Mucosa of descending colon (tissue), 3 donors: ENCODE measurements at regions of chr18 and their contacts with region 1.

Region 1: GRCh38 chr18:75209129-75209950 is at the start of gene PTGR3:
- DNase-seq: peak; percentile 89 to 90 (median 89)
- ATAC-seq: peak; percentile 69
- H3K4me3 ChIP-seq: peak within 1 kb of the TSS; percentile 86
- H3K4me1 ChIP-seq: peaks cover 37% of the 10 kb centered on the region
- CTCF ChIP-seq: no peak
- total RNA-seq, gene PTGR3: 47.6 to 61.4 (median 57.1) TPM

Region 2: DNA sequence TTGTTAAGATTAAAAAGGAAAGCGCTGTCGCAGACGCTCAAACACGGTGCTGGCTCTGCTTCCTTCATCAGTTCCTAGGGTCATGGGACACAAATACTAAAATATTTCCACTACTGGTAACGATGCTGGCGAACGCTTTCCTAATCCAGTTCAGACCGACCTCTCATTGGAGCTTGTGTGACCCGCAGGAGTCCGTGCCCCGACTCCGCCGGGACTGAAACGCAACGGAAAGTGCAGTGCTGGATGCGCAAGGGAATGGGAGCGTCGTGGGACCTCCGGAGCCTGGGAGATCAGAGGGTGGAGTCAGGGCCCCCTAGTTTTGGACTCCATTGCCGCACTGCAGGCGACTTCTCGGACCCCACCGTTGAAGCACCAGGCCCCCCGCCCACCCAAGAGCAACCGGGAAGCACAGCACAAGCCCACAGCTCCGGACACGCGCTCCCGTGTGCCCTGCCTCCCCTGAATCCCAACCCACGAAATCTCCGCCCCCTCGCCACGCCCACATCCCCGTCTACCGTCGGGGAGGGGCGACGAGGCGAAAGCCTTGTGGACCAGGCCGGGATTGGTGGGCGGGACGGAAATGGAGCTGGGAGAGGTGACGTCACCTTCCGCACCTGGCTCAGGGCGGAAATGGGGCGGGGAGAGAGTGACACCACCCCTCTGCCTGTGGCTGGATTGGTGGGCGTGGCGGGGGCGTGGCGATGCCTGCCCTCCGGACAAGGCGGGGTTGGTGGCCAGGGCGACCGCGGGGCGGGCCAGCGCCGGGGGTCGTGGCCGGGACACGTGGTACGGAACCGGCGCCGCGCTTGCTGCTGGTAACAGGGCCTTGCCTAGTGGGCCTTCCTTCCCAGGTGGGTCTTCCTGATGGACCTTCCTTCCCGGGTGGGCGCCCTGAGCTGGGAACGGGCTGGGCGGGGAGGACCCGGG is 713.5 kb before region 1 on chr18 and contains the start of gene CNDP2:
- intact Hi-C with region 1: loop called in 1 of 2 experiments (anchors 10 kb)
- DNase-seq: peak; percentile 100
- ATAC-seq: peak; percentile 94
- H3K4me3 ChIP-seq: peak within 1 kb of the TSS; percentile 90
- H3K4me1 ChIP-seq: peaks cover 23% of the 10 kb centered on the region
- CTCF ChIP-seq: no peak
- total RNA-seq, gene CNDP2: 148 to 263 (median 244) TPM

Region 3: GRCh38 chr18:74645679-74646078 is 563.7 kb before region 1 on chr18:
- intact Hi-C with region 1: loop called in 1 of 2 experiments (anchors 10 kb)
- DNase-seq: no peak
- ATAC-seq: no peak
- H3K4me3 ChIP-seq: no peak overlapping the region
- H3K4me1 ChIP-seq: no peaks in the 10 kb centered on the region
- CTCF ChIP-seq: no peak

Region 4: GRCh38 chr18:75041586-75041985 is 167.8 kb before region 1 on chr18:
- intact Hi-C with region 1: no loop called
- DNase-seq: peak in 1 of 3 donors; percentile 28
- ATAC-seq: peak; percentile 48
- H3K4me3 ChIP-seq: no peak overlapping the region
- H3K4me1 ChIP-seq: no peaks in the 10 kb centered on the region
- CTCF ChIP-seq: no peak